Common myeloid progenitor, CD34-positive (primary cell): ENCODE measurements at regions of chr2 and their contacts with region 1.

Region 1: DNA sequence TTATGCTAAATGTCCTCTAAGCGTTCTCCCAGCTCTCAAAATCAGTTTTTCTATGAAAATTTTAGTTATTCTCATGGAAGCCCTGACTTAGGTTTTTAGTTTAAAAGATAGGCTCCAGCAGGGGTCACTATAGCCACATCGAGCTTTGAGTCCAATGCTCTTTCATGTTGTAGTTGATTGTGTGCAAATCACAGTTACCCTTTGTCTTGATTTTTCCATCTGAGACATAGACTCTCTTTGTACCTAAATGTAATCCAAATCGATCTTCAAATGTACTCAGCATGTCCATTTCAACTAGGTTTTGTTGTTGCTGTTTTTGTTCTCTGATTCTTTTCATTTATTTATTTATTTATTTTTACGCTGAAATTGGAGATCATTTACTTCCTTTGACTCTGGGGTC is 26.4 kb upstream of the MSTN start:
- DNase-seq: peak; percentile 70 to 87 (median 78)
- H3K4me3 ChIP-seq: no peak overlapping the region
- H3K27ac ChIP-seq: no peak overlapping the region
- H3K4me1 ChIP-seq: no peaks in the 10 kb centered on the region
- H3K27me3 ChIP-seq: no peaks in the 10 kb centered on the region

Region 2: DNA sequence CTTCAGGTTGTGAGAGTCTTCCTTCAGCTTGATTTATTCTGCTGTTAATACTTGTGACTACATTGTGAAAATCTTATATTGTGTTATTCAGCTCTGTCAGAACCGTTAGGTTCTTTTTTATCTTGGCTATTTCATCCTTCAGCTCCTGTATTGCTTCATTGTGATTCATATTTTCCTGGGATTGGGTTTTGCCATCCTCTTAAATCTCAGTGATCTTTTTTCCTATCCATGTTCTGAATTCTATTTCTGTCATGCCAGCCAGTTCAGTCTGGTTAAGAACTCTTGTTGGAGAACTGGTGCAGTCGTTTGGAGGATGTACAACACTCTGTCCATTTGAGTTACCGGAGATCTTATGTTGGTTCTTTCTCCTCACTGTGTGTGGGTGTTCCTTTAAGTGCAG is 45.5 kb before region 1 on chr2:
- CTCF ChIA-PET with region 1: no interaction called
- POLR2A ChIA-PET with region 1: no interaction called
- DNase-seq: no peak
- H3K4me3 ChIP-seq: no peak overlapping the region
- H3K27ac ChIP-seq: no peak overlapping the region
- H3K4me1 ChIP-seq: no peaks in the 10 kb centered on the region
- H3K27me3 ChIP-seq: no peaks in the 10 kb centered on the region

Region 3: DNA sequence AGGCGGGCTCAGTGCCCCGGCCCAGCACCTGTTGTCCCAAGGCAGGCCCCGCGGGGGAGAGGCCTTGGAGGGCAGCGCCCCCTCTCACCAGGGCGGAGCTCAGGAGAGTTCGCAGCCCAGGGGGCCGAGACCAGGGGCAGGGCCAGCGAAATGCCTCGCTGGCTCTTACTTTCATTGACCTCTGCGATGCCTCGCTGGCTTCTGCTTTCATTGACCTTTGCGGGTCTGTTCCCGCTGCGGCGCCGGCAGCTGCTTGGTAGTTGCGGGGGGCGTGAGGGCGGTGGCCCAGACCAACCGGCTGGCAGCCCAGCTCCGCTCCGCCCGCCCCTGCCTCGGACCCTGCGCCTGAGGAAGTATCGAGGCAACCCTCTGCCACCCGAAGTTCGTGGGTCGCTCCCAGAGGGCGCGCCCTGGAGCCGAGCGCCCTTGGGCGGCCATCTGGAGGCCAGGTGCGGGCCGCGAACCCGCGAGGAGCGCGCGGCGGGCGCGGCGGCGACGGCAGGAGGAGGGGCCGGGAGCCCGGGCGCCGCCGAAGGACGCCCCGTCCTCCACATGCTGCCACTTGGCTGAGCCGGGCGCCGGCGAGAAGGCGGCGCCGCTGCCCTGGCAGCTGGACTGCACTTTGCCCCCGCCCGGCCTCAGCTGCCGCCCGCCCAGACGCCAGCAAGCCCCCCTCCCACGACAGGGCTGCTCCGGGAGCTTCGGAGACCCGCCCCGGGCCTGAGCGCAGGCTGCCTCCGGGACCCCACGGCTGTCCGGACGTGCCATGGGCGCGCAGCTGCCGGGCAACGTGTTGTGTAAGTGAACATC is 91.6 kb after region 1 on chr2:
- CTCF ChIA-PET with region 1: interaction called, 23 read pairs
- POLR2A ChIA-PET with region 1: no interaction called
- DNase-seq: peak; percentile 82 to 89 (median 86)
- H3K4me3 ChIP-seq: peak overlapping the region; percentile 23 to 83 (median 74)
- H3K27ac ChIP-seq: peak overlapping the region; percentile 36 to 84
- H3K4me1 ChIP-seq: peaks cover 10 to 51% (median 26%) of the 10 kb centered on the region in 4 experiments
- H3K27me3 ChIP-seq: no peaks in the 10 kb centered on the region

Region 4: DNA sequence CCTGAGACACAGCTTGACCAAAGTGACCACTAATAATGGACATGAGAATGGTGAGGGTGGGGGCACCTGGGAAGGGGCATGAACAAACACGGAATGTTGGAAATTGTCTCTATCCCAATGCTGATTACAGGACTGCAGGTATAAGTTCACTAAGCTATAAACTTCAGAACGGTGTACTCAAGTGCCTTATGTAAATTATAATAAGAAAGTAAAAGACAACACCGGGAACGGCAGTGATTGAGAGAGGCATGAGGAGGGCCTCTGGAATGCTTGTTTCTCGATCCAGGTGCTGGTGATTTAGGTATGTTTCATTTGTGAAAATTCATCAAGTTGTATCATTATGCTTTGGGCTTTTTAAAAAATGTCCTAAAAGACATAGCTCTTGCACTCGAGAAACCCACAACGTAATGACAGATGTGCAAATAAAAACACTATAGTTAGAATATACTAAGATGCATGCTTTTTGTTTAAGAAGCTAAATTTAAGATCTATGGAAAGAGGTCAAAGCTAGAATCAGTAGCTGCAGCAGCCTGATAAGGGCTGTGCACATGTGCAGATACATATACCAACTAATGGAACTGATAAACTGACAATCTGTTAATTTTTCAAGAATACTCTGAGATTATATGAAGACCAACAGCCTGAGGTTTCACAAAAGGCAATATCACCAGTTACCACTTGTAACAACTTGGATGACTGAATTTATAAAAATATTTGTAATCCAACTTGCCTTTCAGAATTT is 223.1 kb after region 1 on chr2:
- CTCF ChIA-PET with region 1: interaction called, 10 read pairs
- POLR2A ChIA-PET with region 1: no interaction called
- DNase-seq: peak in 2 of 3 donors; percentile 2 to 29
- H3K4me3 ChIP-seq: no peak overlapping the region
- H3K27ac ChIP-seq: no peak overlapping the region
- H3K4me1 ChIP-seq: peaks cover 0 to 7% (median 6%) of the 10 kb centered on the region in 4 experiments
- H3K27me3 ChIP-seq: no peaks in the 10 kb centered on the region